Activated CD8-positive, alpha-beta T cell treated with anti-CD3 and anti-CD28 coated beads, Interleukin-2, amount 10 ng/mL, durations not matched to agents 7 days and 5 days (primary cell): ENCODE measurements at regions of chr2 and their contacts with region 1.

Region 1: DNA sequence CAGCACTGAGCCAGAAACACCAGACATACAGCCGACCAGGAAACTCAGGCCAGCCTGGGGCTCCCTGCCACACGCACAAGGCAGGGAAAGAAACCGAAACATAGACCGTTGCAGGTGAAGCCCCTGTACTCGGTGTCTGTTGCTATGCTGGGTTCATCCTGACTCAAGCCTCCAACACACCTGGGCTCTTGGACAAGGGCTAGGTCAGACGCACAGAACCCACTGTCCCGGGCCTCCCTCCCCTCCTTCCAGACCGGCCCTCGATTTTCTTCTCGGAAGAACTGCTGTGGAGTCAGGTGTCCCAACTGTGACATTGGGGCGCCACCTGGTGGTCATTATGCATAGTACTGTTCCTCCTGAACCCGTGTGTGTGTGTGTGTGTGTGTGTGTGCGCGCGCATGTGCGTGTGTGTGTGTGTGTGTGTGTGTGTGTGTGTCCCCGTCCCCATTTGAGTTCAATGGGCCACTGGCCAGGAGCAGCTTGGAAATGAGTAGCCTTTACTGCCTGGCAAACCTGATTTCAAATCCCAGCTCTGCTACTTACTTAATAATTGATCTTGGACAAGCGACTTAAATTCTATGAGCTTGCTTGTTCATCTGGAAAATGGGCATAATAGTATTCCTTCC is 55.4 kb upstream of the GLI2 start:
- DNase-seq: peak; percentile 84
- ATAC-seq: peak; percentile 86
- H3K4me3 Mint-ChIP-seq: no peak overlapping the region
- H3K27ac Mint-ChIP-seq: no peak overlapping the region
- H3K4me1 Mint-ChIP-seq: peaks cover 2% of the 10 kb centered on the region
- H3K27me3 Mint-ChIP-seq: peaks cover 16% of the 10 kb centered on the region

Region 2: GRCh38 chr2:120018549-120018948 is 661.7 kb before region 1 on chr2:
- CTCF ChIA-PET with region 1: no interaction called
- POLR2A ChIA-PET with region 1: no interaction called
- DNase-seq: no peak
- ATAC-seq: no peak
- H3K4me3 Mint-ChIP-seq: no peak overlapping the region
- H3K27ac Mint-ChIP-seq: no peak overlapping the region
- H3K4me1 Mint-ChIP-seq: peaks cover 5% of the 10 kb centered on the region
- H3K27me3 Mint-ChIP-seq: peaks cover 3% of the 10 kb centered on the region

Region 3: DNA sequence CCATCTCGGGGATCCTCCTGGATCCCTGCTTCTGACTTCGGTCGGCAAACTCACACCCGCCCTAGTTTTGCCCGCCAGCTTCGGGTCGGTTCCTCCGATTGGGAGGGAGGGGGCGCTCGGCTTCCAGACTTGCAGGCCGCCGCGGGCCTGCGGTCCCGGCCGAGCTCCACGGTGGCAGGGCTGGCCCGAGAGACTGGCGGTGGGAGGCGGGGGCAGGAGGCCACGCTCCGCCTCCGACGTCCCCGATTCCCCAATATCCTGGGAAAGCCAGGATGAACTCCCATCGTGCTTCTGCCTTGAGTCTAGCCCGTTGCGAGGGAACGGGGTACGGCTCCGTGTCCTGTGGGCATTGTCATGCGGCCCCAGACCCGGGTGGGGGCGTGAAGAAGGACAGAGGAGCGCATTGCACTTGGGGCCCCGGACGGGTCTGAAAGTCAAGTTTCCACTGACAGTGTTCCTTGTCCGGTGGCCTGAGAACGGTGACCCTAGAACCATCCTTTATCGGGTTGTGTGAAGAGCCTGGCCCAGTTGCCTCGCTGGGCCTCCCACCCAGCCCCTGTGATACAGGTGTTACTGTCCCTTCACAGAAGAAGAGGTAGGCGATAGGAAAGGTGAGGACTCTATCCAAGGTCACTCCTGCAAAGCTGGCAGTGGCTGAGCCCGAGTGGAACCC is 336.7 kb before region 1 on chr2:
- CTCF ChIA-PET with region 1: interaction called, 11 read pairs
- POLR2A ChIA-PET with region 1: no interaction called
- DNase-seq: peak; percentile 66
- ATAC-seq: peak; percentile 46
- H3K4me3 Mint-ChIP-seq: peak overlapping the region; percentile 25
- H3K27ac Mint-ChIP-seq: no peak overlapping the region
- H3K4me1 Mint-ChIP-seq: peaks cover 25% of the 10 kb centered on the region
- H3K27me3 Mint-ChIP-seq: peaks cover 58% of the 10 kb centered on the region

Region 4: DNA sequence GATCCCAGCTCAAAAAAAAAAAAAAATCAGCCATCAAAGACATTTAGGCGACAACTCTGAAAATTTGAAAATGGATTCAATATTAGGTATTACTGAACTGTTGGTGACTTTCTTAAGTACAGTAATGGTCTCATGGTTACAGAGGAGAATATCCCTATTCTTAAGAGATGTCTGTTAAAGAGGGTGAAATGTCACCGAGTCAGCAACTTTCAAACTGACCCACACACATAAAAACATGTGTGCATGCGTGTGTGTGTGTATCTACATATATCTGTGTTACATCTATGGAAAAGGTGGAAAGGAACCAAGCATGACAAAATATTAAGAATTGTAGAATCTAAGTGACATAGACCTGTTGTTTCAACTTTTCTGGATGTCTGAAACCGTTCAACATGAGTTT is 13.8 kb after region 1 on chr2:
- CTCF ChIA-PET with region 1: interaction called, 10 read pairs
- POLR2A ChIA-PET with region 1: no interaction called
- DNase-seq: no peak
- ATAC-seq: no peak
- H3K4me3 Mint-ChIP-seq: no peak overlapping the region
- H3K27ac Mint-ChIP-seq: no peak overlapping the region
- H3K4me1 Mint-ChIP-seq: peaks cover 6% of the 10 kb centered on the region
- H3K27me3 Mint-ChIP-seq: peaks cover 22% of the 10 kb centered on the region

Region 5: DNA sequence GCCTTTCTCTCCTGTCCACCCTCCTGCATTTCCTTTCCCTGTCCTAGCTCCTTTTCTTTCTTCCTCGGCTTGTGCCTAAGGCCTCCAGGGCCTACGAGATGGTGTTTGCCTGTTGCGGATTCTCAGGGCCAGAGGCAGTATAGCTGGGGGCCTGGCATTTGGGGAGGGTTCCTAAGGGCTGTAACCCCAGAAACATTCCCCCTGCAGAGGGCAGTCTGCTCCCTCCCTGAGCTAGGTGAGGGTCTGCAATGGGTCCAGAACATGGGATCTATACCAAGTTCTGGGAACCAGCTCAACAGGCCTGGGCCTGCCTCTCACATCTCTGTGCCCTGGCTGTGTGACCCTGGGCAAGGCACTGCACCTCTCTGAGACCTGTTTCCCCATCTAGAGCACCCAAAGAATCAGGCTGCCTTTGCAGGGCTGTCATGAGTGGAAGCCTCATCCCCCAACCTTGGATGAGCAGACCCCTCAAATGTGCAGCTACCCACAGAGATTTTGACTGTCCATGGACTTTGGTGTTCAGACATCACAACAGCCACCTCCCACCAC is 153.0 kb after region 1 on chr2:
- CTCF ChIA-PET with region 1: no interaction called
- POLR2A ChIA-PET with region 1: no interaction called
- DNase-seq: no peak
- ATAC-seq: no peak
- H3K4me3 Mint-ChIP-seq: no peak overlapping the region
- H3K27ac Mint-ChIP-seq: no peak overlapping the region
- H3K4me1 Mint-ChIP-seq: no peaks in the 10 kb centered on the region
- H3K27me3 Mint-ChIP-seq: peaks cover 3% of the 10 kb centered on the region